ENCODE measurements at regions of chr9 and their contacts with region 1.

Region 1: DNA sequence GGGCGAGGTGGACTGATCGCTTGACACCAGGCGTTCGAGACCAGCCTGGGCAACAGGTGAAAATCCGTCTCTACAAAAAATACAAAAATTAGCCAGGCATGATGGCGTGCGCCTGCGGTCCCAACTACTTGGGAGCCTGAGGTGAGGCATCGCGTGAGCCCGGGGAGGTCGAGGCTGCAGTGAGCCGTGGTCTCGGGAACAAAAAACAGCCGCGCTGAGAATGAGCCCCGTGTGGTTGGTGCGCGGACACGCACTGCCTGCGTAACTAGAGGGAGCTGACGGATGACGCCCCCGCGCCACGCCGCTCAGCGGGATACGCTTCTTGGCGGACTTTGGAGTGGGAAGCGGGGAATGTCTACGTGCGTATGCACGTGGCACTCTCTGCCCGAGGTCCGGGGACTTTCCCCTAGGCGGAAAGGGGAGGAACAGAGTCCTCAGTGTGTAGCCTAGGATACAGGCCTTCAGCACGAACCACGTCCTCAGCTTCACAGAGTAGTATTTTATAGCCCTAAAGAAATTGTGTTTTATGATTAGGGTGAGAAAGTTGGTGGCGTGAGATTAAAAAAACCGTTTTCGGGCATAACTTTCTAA is at the start of gene RMRP:
- DNase-seq: peak; percentile 96
- H3K4me3 Mint-ChIP-seq: peak within 1 kb of the TSS; percentile 86
- H3K27ac Mint-ChIP-seq: peak within 1 kb of the TSS; percentile 96
- H3K4me1 Mint-ChIP-seq: peaks cover 64% of the 10 kb centered on the region
- H3K27me3 Mint-ChIP-seq: peaks cover 2% of the 10 kb centered on the region
- total RNA-seq, gene RMRP: 10,694 to 13,592 TPM

Region 2: DNA sequence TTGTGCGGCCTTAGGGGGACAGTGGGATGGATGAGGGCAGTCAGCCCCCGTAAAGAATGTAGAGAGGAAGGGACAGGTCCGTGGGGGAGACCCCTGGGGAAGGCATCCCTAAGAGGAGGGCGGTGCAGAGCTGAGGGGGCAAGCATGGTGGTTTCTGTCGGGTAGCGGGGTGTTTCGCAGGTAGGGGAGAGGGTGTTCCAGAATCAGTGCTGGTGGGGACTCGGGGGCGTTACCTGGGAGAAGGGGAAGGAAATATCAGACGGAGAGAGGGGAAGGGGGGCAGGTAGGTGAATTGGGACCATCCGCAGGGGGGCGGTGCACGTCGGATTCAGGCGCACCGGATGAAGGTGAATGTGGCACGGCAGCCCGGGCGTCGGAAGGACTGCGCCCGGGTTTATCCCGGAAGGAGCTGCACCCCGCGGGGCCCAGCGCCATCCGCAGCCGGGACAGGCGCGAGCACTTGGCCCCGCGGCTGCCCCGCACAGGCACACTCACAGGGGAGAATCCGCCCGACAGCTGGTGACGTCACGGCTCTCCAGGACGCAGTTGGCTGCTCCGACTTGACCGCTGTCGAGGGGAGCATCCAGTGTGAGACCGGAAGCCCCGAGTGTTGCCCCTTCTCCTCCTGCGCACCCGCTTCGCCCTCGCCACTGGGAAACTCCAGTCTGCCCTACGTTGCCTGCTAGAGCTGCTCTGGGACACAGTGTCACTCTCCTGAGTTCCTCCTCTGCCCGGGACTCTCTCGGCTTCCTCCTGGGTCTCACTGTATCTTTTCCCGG is 40.8 kb before region 1 on chr9:
- CTCF ChIA-PET with region 1: interaction called, 23 read pairs
- POLR2A ChIA-PET with region 1: interaction called, 6 read pairs
- intact Hi-C with region 1: loop called (anchors 1 kb)
- DNase-seq: peak; percentile 80
- H3K4me3 Mint-ChIP-seq: peak overlapping the region; percentile 77
- H3K27ac Mint-ChIP-seq: peak overlapping the region; percentile 79
- H3K4me1 Mint-ChIP-seq: peaks cover 37% of the 10 kb centered on the region
- H3K27me3 Mint-ChIP-seq: no peaks in the 10 kb centered on the region